CD8-positive, alpha-beta T cell (primary cell): ENCODE measurements at regions of chr15 and their contacts with region 1.

Region 1: GRCh38 chr15:41827880-41828806 is at the start of gene JMJD7:
- DNase-seq: peak; percentile 93 to 98 (median 95)
- ATAC-seq: peak; percentile 97
- H3K4me3 ChIP-seq: peak within 1 kb of the TSS; percentile 93 to 95
- H3K4me3 Mint-ChIP-seq: peak within 1 kb of the TSS; percentile 83
- H3K27ac ChIP-seq: peak within 1 kb of the TSS; percentile 74 to 87
- H3K27ac Mint-ChIP-seq: peak within 1 kb of the TSS; percentile 87
- H3K4me1 ChIP-seq: peaks cover 35% of the 10 kb centered on the region
- H3K4me1 Mint-ChIP-seq: peaks cover 44% of the 10 kb centered on the region
- H3K27me3 ChIP-seq: no peaks in the 10 kb centered on the region
- H3K27me3 Mint-ChIP-seq: no peaks in the 10 kb centered on the region
- CTCF ChIP-seq: no peak
- total RNA-seq, gene JMJD7: 27.5 to 38.3 TPM

Region 2: DNA sequence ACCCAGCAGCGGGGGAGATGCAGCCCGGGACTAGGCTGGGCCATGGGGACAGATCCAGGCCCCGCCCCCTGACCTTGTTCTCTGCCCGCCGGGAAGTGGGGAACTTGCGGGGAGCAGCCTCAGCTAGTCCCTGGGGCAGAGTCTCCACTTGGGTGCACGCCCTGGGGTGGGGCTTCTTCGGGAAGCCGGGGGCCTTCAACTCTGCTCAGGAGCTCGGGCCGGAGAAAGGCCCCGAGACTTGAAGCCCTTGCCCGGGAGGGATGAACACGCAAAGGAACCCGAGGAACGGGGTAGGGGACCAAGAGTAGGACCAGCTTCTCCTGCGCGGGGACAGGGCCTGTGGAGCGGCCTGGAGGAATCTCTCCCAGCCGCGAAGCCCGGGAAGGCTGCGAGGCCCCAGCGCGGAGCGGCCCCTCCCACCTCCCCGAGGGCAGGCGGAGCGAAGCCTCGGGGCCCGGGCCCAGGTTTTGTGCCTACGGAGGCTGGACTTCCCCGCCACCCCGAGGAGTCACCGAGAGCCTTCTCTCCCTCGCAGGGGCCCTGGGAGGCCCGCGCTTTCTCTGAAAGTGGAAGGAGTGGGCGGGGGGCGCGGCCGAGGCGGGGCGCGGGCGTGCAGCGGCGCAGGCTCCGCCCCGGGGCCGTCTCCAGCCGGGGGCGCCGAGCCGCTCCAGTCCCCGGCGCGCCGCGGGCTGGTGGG is 334.8 kb before region 1 on chr15 and contains the start of gene ITPKA:
- CTCF ChIA-PET with region 1: no interaction called
- POLR2A ChIA-PET with region 1: no interaction called
- intact Hi-C with region 1: loop called in 1 of 2 experiments (anchors 5 kb)
- DNase-seq: peak; percentile 38 to 87 (median 74)
- ATAC-seq: peak; percentile 82
- H3K4me3 ChIP-seq: peak within 1 kb of the TSS; percentile 64 to 75
- H3K4me3 Mint-ChIP-seq: peak within 1 kb of the TSS; percentile 79
- H3K27ac ChIP-seq: no peak within 1 kb of the TSS
- H3K27ac Mint-ChIP-seq: no peak within 1 kb of the TSS
- H3K4me1 ChIP-seq: peaks cover 31% of the 10 kb centered on the region
- H3K4me1 Mint-ChIP-seq: peaks cover 15% of the 10 kb centered on the region
- H3K27me3 ChIP-seq: peaks cover 33 to 54% of the 10 kb centered on the region in 2 experiments
- H3K27me3 Mint-ChIP-seq: peaks cover 38% of the 10 kb centered on the region
- CTCF ChIP-seq: no peak
- total RNA-seq, gene ITPKA: 0.50 TPM in 1 of 2 experiments, not detected in the other

Region 3: DNA sequence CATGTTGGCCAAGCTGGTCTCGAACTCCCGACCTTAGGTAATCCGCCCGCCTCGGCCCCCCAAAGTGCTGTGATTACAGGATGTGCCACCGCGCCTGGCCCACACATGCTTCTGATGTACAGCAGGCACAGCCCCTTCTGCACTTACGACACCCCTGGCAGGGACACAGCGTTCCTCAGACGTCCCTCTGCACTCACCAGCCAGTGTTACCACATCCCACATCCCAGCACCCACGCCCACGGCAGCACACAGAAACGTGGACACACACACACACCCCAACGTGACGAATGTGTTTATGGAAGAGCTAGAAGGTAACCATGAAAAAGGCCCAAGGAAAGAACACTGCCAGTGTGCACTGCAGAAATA is 283.5 kb before region 1 on chr15:
- CTCF ChIA-PET with region 1: no interaction called
- POLR2A ChIA-PET with region 1: no interaction called
- intact Hi-C with region 1: loop called (anchors 2 to 5 kb)
- DNase-seq: peak in 7 of 9 experiments; percentile 16 to 61 (median 55)
- ATAC-seq: peak; percentile 30
- H3K4me3 ChIP-seq: peak overlapping the region; percentile 88 to 95
- H3K4me3 Mint-ChIP-seq: peak overlapping the region; percentile 91
- H3K27ac ChIP-seq: peak overlapping the region in 1 of 2 experiments; percentile 64
- H3K27ac Mint-ChIP-seq: peak overlapping the region; percentile 95
- H3K4me1 ChIP-seq: peaks cover 8% of the 10 kb centered on the region
- H3K4me1 Mint-ChIP-seq: peaks cover 18% of the 10 kb centered on the region
- H3K27me3 ChIP-seq: no peaks in the 10 kb centered on the region
- H3K27me3 Mint-ChIP-seq: no peaks in the 10 kb centered on the region
- CTCF ChIP-seq: no peak

Region 4: GRCh38 chr15:41795996-41796856 is 31.9 kb before region 1 on chr15:
- CTCF ChIA-PET with region 1: no interaction called
- POLR2A ChIA-PET with region 1: no interaction called
- intact Hi-C with region 1: no loop called
- DNase-seq: no peak
- ATAC-seq: no peak
- H3K4me3 ChIP-seq: no peak overlapping the region
- H3K4me3 Mint-ChIP-seq: no peak overlapping the region
- H3K27ac ChIP-seq: no peak overlapping the region
- H3K27ac Mint-ChIP-seq: peak overlapping the region; percentile 62
- H3K4me1 ChIP-seq: peaks cover 12% of the 10 kb centered on the region
- H3K4me1 Mint-ChIP-seq: peaks cover 28% of the 10 kb centered on the region
- H3K27me3 ChIP-seq: no peaks in the 10 kb centered on the region
- H3K27me3 Mint-ChIP-seq: no peaks in the 10 kb centered on the region
- CTCF ChIP-seq: no peak

Region 5: GRCh38 chr15:41894791-41895463 is 66.8 kb after region 1 on chr15:
- CTCF ChIA-PET with region 1: interaction called, 6 read pairs
- POLR2A ChIA-PET with region 1: interaction called, 10 read pairs
- intact Hi-C with region 1: loop called (anchors 1 kb)
- DNase-seq: peak; percentile 82 to 96 (median 94)
- ATAC-seq: peak; percentile 95
- H3K4me3 ChIP-seq: peak overlapping the region; percentile 45 to 53
- H3K4me3 Mint-ChIP-seq: peak overlapping the region; percentile 78
- H3K27ac ChIP-seq: peak overlapping the region; percentile 80 to 95
- H3K27ac Mint-ChIP-seq: peak overlapping the region; percentile 98
- H3K4me1 ChIP-seq: peaks cover 30% of the 10 kb centered on the region
- H3K4me1 Mint-ChIP-seq: peaks cover 36% of the 10 kb centered on the region
- H3K27me3 ChIP-seq: no peaks in the 10 kb centered on the region
- H3K27me3 Mint-ChIP-seq: no peaks in the 10 kb centered on the region
- CTCF ChIP-seq: no peak

Region 6: GRCh38 chr15:41936649-41937567 is 108.8 kb after region 1 on chr15:
- CTCF ChIA-PET with region 1: interaction called, 7 read pairs
- POLR2A ChIA-PET with region 1: interaction called, 12 read pairs
- intact Hi-C with region 1: loop called (anchors 1 kb)
- DNase-seq: peak; percentile 52 to 94 (median 74)
- ATAC-seq: peak; percentile 80
- H3K4me3 ChIP-seq: peak overlapping the region; percentile 9 to 27
- H3K4me3 Mint-ChIP-seq: peak overlapping the region; percentile 75
- H3K27ac ChIP-seq: peak overlapping the region; percentile 86 to 97
- H3K27ac Mint-ChIP-seq: peak overlapping the region; percentile 96
- H3K4me1 ChIP-seq: peaks cover 55% of the 10 kb centered on the region
- H3K4me1 Mint-ChIP-seq: peaks cover 58% of the 10 kb centered on the region
- H3K27me3 ChIP-seq: no peaks in the 10 kb centered on the region
- H3K27me3 Mint-ChIP-seq: no peaks in the 10 kb centered on the region
- CTCF ChIP-seq: peak; percentile 39